Dorsolateral prefrontal cortex (tissue), 120 donors: ENCODE measurements at regions of chr6 and their contacts with region 1.

Region 1: DNA sequence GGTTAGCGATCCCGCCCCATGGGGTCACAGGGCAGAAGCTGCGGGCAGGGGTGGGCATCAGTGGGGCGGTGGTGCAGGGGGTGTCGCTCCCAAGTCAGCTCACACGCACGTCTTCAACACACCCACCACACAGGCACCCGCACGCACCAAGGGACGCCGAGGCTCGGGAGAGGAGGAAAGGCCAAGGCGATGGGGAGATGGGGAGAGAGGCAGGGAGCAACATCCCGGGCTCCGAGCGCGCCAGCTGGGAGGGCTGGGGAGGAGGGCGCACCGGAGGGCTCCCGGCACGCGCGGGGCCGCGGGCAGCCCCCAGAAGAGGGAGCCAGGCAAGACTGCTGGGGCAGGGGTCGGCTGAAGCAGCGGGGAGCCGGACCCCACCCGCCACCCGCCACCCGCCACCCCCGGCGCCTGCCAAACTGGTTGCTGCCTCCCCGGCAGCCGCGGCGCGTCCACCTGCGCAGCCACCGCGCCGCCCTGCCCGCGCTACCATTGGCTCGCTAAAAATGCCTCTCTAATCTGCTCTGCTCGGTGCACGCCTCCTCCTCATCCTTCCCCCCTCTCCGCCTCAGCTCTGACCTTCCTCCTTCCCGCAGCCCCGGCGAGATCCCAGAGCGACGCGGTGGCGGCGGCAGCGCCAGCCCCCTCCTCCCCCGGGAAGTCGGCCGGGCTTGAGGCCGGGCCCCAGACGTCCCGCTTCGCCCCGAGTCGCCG is at the start of gene PACSIN1:
- DNase-seq: peak in 9 of 10 donors; percentile 26 to 87 (median 73)
- H3K4me3 ChIP-seq: peak within 1 kb of the TSS; percentile 21 to 77 (median 63)
- H3K27ac ChIP-seq: peak within 1 kb of the TSS in 56 of 59 donors; percentile 2 to 92 (median 79)
- H3K27me3 ChIP-seq: peaks cover 0 to 20% (median 4%) of the 10 kb centered on the region in 45 donors
- CTCF ChIP-seq: no peak
- total RNA-seq, gene PACSIN1: 78.5 to 489 (median 335) TPM

Region 2: DNA sequence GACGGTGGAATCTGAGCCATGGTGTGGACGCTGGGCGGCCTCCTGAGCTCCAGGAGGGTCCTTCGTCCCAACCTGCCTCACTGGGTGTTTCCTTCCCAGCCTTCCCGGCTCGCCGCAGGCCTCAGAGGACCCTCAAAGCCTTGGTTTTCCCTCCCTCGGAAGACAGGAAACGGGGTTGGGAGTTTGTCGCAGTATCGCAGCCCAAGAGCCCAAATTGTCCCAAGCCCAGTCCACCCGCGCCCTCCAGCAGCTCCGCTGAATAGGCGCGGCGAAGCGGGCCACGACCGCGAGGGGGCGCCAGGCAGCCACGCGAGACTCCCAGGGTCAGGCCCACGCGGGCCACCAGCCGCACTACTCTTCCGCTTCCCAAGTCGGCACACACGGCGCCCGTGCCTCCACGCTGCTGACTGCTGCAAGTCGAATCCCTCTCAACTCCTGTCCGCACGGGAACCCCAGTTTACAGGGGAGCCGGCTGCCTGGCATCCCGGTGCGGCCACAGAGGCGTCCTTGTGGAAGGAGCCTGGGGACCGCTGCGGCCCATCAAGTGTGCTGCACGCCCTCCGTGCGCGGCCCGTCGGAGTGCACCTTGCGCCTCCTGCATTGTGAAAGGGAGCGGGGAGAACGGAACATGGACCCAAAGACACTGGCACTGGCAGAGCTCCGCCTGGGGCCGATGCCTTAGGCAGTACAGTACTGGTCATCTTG is 269.4 kb before region 1 on chr6:
- intact Hi-C with region 1: no loop called
- DNase-seq: peak; percentile 78 to 92 (median 85)
- H3K4me3 ChIP-seq: peak overlapping the region; percentile 47 to 85 (median 64)
- H3K27ac ChIP-seq: peak overlapping the region in 7 of 59 donors; percentile 4 to 75 (median 70)
- H3K27me3 ChIP-seq: no peaks in the 10 kb centered on the region
- CTCF ChIP-seq: peak; percentile 78 to 100 (median 97)

Region 3: DNA sequence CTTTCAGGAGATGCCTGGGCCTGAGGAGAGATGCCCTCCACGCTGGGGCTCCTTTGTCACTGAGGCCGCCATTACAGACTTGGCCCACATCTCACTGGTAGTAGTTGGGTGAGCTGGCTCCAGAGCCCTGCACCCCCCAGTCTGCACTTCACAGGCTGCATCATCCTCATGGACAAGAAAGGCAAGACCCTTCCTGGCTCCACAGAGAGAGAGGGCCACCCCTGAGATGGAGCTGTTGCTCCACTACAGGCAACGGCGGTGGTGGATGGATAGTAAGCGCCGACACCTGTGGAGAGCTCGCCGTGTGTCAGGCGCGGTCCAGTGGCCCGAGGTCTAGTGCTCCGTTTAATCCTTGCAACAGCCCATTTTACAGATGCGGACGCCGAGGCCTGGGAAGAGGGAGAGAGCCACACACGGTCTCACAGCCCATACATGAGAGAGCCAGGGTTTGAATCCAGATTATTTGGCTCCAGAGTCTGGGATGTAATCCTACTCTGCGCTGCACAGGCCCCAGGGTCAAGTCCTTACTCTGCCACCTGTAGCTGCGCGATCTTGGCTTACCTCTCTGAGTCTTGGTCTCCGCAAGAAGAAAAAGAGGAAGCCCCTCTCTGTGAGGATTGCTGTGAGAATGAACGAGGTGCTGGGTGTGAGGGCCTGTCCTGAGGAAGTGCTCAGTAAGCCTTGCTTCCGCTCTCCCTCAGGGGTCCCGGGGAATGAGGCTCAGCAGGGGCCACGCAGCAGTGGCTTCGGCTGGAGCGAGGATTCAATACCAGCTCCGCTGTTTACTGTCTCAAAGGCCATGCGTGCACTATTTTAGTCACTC is 56.0 kb after region 1 on chr6:
- intact Hi-C with region 1: loop called in 1 of 2 experiments (anchors 5 kb)
- DNase-seq: peak in 3 of 10 donors; percentile 22 to 32 (median 28)
- H3K4me3 ChIP-seq: no peak overlapping the region
- H3K27ac ChIP-seq: peak overlapping the region in 2 of 59 donors; percentile 11 to 57
- H3K27me3 ChIP-seq: peaks cover 0 to 3% (median 0%) of the 10 kb centered on the region in 45 donors
- CTCF ChIP-seq: no peak

Region 4: DNA sequence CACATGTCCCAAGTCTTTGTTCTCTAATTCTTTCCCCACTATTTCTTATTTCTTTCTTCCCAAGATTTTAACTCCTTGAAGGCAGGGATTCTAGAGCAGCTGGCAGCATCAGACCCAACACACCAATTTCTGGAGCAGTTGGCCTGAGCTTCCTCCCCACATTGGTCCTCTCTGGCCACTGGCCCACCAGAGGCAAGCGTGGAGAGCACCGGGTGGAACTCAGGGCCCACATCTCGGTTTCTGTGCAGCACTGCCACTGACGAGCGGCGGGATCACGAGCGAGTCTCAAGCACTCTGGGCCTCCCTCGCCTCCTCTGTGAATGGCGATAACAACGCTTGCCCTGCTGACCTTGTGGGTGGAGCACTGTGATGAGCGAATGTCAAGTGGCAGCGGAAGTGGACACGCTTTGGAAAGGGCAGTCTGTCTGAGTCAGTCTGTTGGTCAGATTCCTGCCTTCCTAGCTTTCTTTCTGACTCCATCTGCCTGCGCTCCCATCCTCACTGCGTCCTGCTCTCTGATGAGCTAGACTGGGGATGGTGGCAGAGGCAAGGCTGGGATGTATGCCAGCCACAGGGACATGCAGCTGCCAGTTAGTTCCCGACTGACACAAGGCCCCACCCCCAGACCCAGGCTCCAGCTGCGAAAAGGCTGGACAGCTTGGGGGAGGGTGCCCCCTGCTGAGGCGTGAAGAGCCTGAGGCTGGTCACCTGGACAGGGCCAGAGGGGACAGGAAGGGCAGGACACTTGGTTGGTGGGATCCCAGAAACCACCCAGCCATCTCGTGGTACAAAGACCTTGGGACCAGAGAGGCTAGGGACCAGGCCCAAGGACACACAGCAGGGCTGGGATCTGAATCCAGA is 94.9 kb after region 1 on chr6:
- intact Hi-C with region 1: no loop called
- DNase-seq: peak in 3 of 10 donors; percentile 16 to 57 (median 51)
- H3K4me3 ChIP-seq: no peak overlapping the region
- H3K27ac ChIP-seq: no peak overlapping the region
- H3K27me3 ChIP-seq: no peaks in the 10 kb centered on the region
- CTCF ChIP-seq: peak in 4 of 56 donors; percentile 10 to 52 (median 16)

Region 5: GRCh38 chr6:34680802-34681515 is 215.3 kb after region 1 on chr6:
- intact Hi-C with region 1: no loop called
- DNase-seq: no peak
- H3K4me3 ChIP-seq: no peak overlapping the region
- H3K27ac ChIP-seq: no peak overlapping the region
- H3K27me3 ChIP-seq: no peaks in the 10 kb centered on the region
- CTCF ChIP-seq: no peak